ENCODE measurements at regions of chr10 and their contacts with region 1.

Region 1: DNA sequence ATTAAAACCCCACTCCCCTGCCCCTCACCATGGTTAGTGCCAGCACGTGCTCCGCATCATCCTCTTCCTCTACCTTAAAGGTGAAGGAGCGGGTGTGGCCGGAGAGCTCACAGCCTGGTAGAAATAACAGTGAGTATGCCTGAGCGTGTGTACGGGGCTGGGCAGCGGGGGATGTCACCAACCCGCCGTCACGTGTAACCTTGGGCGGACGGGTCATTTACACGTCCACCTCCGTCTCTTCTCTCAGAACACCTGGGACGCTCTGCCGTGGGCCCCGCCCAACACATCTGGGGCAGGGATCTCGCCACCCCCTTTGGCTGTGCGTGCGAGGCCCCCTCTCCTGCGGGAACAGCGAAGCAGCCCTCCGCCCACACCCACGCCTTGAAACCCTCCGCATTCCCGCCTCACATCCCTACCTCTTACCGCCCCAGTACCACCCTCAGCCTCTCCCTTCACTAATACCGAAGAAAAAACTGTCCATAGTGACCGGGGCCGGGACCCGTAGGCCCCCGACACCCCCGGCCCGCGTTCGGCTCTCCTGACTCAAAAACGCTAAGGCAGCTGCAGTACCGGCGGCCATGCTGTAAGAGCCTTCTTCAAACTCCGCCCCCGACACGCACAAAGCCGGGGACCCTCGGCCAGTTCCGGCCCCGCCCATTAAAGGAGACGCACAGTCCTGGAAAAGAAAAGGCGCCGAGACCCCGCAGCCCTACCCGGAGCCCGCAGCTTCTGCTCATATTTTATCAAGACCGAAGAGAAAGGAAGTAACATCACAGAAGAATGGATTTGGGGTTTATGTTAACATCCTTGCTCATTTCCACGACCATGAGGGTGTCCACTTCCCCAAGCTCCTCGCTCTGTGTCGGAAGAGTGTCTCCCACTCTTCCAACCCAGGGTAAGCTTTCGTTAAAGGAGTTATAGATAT is at the start of gene NPM3:
- DNase-seq: peak; percentile 78
- H3K4me3 Mint-ChIP-seq: peak within 1 kb of the TSS; percentile 100
- H3K27ac Mint-ChIP-seq: peak within 1 kb of the TSS; percentile 99
- H3K4me1 Mint-ChIP-seq: peaks cover 59% of the 10 kb centered on the region
- H3K27me3 Mint-ChIP-seq: peaks cover 5% of the 10 kb centered on the region
- total RNA-seq, gene NPM3: 149 and 151 TPM in 2 replicates

Region 2: DNA sequence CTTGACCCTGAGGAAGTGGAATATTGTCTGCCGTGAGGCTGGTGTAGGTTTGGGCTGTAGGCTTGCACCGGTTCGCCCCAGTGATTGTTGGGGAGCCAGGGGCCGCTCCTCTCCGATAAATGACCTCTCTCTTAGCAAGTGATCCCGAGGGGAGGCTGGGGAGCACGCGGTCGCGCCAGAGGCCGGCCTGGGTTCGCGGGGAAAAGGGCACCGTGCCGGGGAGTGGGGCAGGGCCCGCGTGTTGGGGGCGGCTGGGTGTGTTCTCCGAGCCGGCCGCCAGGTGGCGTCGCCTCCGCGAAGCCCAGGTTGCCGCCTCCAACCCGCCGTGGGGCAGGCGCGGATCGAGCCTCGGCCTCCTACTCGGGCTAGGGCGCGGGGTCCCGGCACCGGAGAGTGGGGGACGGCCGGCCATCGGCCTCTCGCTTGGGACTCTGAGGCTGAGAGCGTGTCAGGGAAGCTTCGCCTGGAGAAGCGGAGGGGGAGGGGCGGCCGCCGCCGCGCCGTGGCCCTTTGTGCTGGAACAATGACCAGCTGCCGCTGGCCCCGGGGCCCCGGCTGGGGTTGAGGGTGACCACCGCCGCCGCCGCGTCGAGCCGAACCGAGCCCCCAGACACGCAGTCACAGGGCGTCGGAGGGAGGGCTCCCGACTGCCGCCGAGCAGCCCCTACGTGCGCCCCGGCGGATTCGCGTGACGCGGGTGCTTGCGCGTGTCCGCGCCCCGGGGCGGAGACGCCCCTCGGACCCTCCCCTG is 783.9 kb before region 1 on chr10:
- intact Hi-C with region 1: loop called (anchors 5 kb)
- DNase-seq: peak; percentile 77
- H3K4me3 Mint-ChIP-seq: peak overlapping the region; percentile 88
- H3K27ac Mint-ChIP-seq: peak overlapping the region; percentile 93
- H3K4me1 Mint-ChIP-seq: peaks cover 29% of the 10 kb centered on the region
- H3K27me3 Mint-ChIP-seq: peaks cover 4% of the 10 kb centered on the region

Region 3: GRCh38 chr10:101587725-101588653 is 195.1 kb before region 1 on chr10 and contains the starts of genes DPCD and POLL:
- intact Hi-C with region 1: loop called (anchors 1 kb)
- DNase-seq: peak; percentile 85
- H3K4me3 Mint-ChIP-seq: peak within 1 kb of the TSS; percentile 93
- H3K27ac Mint-ChIP-seq: peak within 1 kb of the TSS; percentile 81
- H3K4me1 Mint-ChIP-seq: peaks cover 24% of the 10 kb centered on the region
- H3K27me3 Mint-ChIP-seq: peaks cover 4% of the 10 kb centered on the region
- total RNA-seq, gene DPCD: 3.6 and 4.8 TPM in 2 replicates
- total RNA-seq, gene POLL: 32.4 and 33.5 TPM in 2 replicates

Region 4: DNA sequence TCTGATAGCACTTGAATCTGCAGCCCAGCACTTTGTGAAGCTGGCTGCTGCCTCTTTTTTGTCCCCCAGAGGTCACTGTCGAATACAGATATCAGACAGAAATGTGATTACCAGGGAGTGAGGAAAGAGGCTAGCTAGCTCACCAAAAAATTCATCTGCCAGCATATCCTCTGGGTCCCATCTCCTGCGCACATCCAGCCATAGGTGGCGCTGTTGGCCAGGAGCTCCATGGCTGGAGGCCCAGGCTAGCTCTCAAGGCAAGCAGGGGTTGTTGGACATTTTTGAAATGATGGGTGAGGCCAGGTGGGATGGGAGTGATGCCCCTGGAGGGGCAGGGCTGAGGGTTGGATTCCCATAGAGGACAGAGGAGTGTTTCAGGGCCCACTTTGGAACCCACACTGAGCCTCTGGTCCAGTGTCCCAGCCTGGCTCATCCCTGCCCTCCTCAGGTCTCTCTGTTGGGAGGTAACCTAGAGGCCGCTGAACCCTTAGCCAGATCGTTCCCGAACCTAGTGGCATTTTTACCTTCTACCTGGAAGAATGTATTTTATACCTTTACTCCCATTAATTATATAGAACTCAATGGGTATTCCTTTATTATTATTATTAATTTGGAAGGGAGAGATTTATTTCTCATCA is 180.2 kb before region 1 on chr10:
- intact Hi-C with region 1: loop called (anchors 1 kb)
- DNase-seq: peak; percentile 68
- H3K4me3 Mint-ChIP-seq: no peak overlapping the region
- H3K27ac Mint-ChIP-seq: no peak overlapping the region
- H3K4me1 Mint-ChIP-seq: no peaks in the 10 kb centered on the region
- H3K27me3 Mint-ChIP-seq: no peaks in the 10 kb centered on the region

Region 5: GRCh38 chr10:101693978-101694673 is 88.9 kb before region 1 on chr10:
- intact Hi-C with region 1: loop called (anchors 2 kb)
- DNase-seq: peak; percentile 70
- H3K4me3 Mint-ChIP-seq: peak overlapping the region; percentile 93
- H3K27ac Mint-ChIP-seq: peak overlapping the region; percentile 98
- H3K4me1 Mint-ChIP-seq: peaks cover 41% of the 10 kb centered on the region
- H3K27me3 Mint-ChIP-seq: no peaks in the 10 kb centered on the region

Region 6: GRCh38 chr10:101726116-101726388 is 57.0 kb before region 1 on chr10:
- intact Hi-C with region 1: no loop called
- DNase-seq: no peak
- H3K4me3 Mint-ChIP-seq: no peak overlapping the region
- H3K27ac Mint-ChIP-seq: no peak overlapping the region
- H3K4me1 Mint-ChIP-seq: peaks cover 6% of the 10 kb centered on the region
- H3K27me3 Mint-ChIP-seq: peaks cover 15% of the 10 kb centered on the region

Region 7: GRCh38 chr10:101744267-101744666 is 38.8 kb before region 1 on chr10:
- intact Hi-C with region 1: no loop called
- DNase-seq: no peak
- H3K4me3 Mint-ChIP-seq: no peak overlapping the region
- H3K27ac Mint-ChIP-seq: no peak overlapping the region
- H3K4me1 Mint-ChIP-seq: no peaks in the 10 kb centered on the region
- H3K27me3 Mint-ChIP-seq: peaks cover 13% of the 10 kb centered on the region

Region 8: GRCh38 chr10:101830322-101831168 is 47.5 kb after region 1 on chr10:
- intact Hi-C with region 1: loop called (anchors 1 kb)
- DNase-seq: peak; percentile 85
- H3K4me3 Mint-ChIP-seq: peak overlapping the region; percentile 79
- H3K27ac Mint-ChIP-seq: peak overlapping the region; percentile 94
- H3K4me1 Mint-ChIP-seq: peaks cover 51% of the 10 kb centered on the region
- H3K27me3 Mint-ChIP-seq: no peaks in the 10 kb centered on the region

Region 9: DNA sequence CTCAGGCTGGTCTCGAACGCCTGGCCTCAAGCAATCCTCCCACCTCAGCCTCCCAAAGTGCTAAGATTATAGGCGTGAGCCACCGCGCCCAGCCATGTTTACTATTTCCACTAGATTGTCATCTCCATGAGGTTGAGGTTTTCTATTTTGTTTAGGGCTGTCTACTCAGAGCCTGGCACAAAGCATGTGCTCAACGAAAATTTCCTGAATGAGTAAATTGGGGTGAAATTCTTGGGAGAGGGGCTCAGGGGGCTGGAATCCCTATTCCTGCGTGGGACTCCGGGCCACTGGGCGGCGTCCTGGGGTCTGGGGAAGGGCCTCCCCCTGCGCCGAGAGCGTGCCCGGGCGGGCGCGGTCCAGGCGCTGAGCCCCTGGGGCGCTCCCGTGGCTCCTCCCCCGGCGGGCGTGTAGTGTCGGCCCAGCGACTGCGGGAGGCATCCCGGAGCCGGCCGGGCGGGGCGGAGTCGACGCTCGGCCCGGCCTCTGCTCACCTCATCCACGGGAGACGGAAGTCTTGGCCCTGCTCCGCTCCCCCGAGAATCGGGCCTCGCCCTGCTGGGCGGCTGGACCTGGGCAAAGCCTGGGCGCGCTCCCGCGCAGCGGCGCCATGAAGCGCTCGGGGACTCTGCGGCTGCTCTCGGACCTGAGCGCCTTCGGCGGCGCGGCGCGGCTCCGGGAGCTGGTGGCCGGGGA is 281.9 kb after region 1 on chr10 and contains the start of gene HPS6:
- intact Hi-C with region 1: loop called (anchors 2 kb)
- DNase-seq: peak; percentile 89
- H3K4me3 Mint-ChIP-seq: peak within 1 kb of the TSS; percentile 89
- H3K27ac Mint-ChIP-seq: peak within 1 kb of the TSS; percentile 90
- H3K4me1 Mint-ChIP-seq: peaks cover 17% of the 10 kb centered on the region
- H3K27me3 Mint-ChIP-seq: no peaks in the 10 kb centered on the region
- total RNA-seq, gene HPS6: 24.5 and 26.8 TPM in 2 replicates